ENCODE measurements at regions of chr4 and their contacts with region 1.

Region 1: GRCh38 chr4:168585168-168586091 is 88.6 kb downstream of the PALLD start:
- DNase-seq: no peak
- ATAC-seq: peak; percentile 98
- H3K4me3 ChIP-seq: no peak overlapping the region
- H3K27ac ChIP-seq: no peak overlapping the region
- H3K4me1 ChIP-seq: no peaks in the 10 kb centered on the region
- H3K27me3 ChIP-seq: no peaks in the 10 kb centered on the region
- CTCF ChIP-seq: peak; percentile 38 to 63 (median 63); a peak in 5 of 6 replicates
- EP300 ChIP-seq: no peak
- POLR2A ChIP-seq: no peak
- RAD21 ChIP-seq: peak; percentile 47

Region 2: GRCh38 chr4:168574581-168575295 is 10.7 kb before region 1 on chr4:
- CTCF ChIA-PET with region 1: interaction called, 3 read pairs
- POLR2A ChIA-PET with region 1: no interaction called
- RAD21 ChIA-PET with region 1: interaction called, 3 read pairs
- SMC1A ChIA-PET with region 1: interaction called, 10 read pairs
- in situ Hi-C with region 1: no loop called
- intact Hi-C with region 1: no loop called
- DNase-seq: no peak
- ATAC-seq: no peak
- H3K4me3 ChIP-seq: no peak overlapping the region
- H3K27ac ChIP-seq: no peak overlapping the region
- H3K4me1 ChIP-seq: no peaks in the 10 kb centered on the region
- H3K27me3 ChIP-seq: no peaks in the 10 kb centered on the region
- CTCF ChIP-seq: no peak
- EP300 ChIP-seq: no peak
- POLR2A ChIP-seq: no peak
- RAD21 ChIP-seq: no peak

Region 3: GRCh38 chr4:168604496-168605373 is 19.3 kb after region 1 on chr4:
- CTCF ChIA-PET with region 1: interaction called, 11 read pairs
- POLR2A ChIA-PET with region 1: no interaction called
- RAD21 ChIA-PET with region 1: interaction called, 10 read pairs
- SMC1A ChIA-PET with region 1: no interaction called
- in situ Hi-C with region 1: no loop called
- intact Hi-C with region 1: no loop called
- DNase-seq: no peak
- ATAC-seq: no peak
- H3K4me3 ChIP-seq: no peak overlapping the region
- H3K27ac ChIP-seq: no peak overlapping the region
- H3K4me1 ChIP-seq: no peaks in the 10 kb centered on the region
- H3K27me3 ChIP-seq: no peaks in the 10 kb centered on the region
- CTCF ChIP-seq: no peak
- EP300 ChIP-seq: no peak
- POLR2A ChIP-seq: no peak
- RAD21 ChIP-seq: no peak

Region 4: GRCh38 chr4:168917138-168917779 is 331.8 kb after region 1 on chr4:
- CTCF ChIA-PET with region 1: interaction called, 108 read pairs
- POLR2A ChIA-PET with region 1: interaction called, 3 read pairs
- RAD21 ChIA-PET with region 1: interaction called, 52 read pairs
- SMC1A ChIA-PET with region 1: interaction called, 65 read pairs
- in situ Hi-C with region 1: loop called (anchors 5 kb)
- intact Hi-C with region 1: loop called (anchors 1 kb)
- DNase-seq: no peak
- ATAC-seq: peak; percentile 80
- H3K4me3 ChIP-seq: no peak overlapping the region
- H3K27ac ChIP-seq: no peak overlapping the region
- H3K4me1 ChIP-seq: no peaks in the 10 kb centered on the region
- H3K27me3 ChIP-seq: no peaks in the 10 kb centered on the region
- CTCF ChIP-seq: peak; percentile 37 to 52 (median 41); a peak in 4 of 6 replicates
- EP300 ChIP-seq: no peak
- POLR2A ChIP-seq: no peak
- RAD21 ChIP-seq: peak; percentile 69

Region 5: DNA sequence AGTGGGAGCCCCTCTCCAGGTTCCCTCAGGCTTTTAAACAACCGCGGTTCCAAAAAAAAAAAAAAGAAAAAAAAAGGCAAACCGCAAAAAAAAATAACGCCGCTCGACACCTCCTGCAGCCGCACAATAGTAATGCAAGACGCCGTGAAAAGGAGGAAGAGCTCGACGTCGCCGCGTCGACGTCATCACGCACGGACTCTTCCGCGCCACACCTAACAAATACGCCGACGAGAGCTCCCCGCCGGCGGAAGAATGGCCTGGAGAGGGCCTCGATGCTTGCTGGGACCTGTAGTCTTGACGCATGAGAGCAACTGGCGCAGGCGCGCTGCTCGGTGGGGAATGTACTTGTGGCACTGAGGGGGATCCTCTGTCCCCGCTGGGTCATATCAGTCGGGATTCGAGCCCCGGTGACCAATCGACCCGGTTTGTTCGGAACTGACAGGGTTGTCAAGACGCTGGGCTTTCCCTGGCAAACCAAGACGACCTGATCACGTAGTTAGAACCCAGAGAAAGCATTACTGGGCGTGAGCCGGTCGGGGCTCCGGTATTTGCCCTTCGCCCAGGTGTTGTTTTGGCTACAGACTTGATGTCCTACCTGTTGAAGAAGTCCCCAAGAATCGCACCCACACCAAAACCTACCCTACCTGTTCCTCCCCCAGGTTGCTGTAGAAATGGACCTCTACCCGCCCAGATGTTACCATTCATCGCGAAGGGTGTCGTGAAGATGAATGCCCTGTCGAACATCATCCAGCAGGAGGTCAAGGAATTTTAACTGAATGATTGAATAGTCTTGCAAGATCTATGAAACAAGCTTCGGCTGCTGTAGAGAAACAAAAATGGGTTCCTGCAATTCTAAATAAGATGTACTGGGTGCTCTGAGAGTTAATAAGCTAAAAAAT is 424.9 kb after region 1 on chr4 and contains the start of gene CBR4:
- CTCF ChIA-PET with region 1: interaction called, 3 read pairs
- POLR2A ChIA-PET with region 1: no interaction called
- RAD21 ChIA-PET with region 1: interaction called, 8 read pairs
- SMC1A ChIA-PET with region 1: interaction called, 4 read pairs
- in situ Hi-C with region 1: no loop called
- intact Hi-C with region 1: loop called (anchors 10 kb)
- DNase-seq: peak; percentile 94
- ATAC-seq: peak; percentile 96
- H3K4me3 ChIP-seq: peak within 1 kb of the TSS; percentile 86
- H3K27ac ChIP-seq: peak within 1 kb of the TSS; percentile 91
- H3K4me1 ChIP-seq: no peaks in the 10 kb centered on the region
- H3K27me3 ChIP-seq: no peaks in the 10 kb centered on the region
- CTCF ChIP-seq: peak; percentile 6 to 36 (median 35); a peak in 2 of 6 replicates
- EP300 ChIP-seq: no peak; a peak in 1 of 4 replicates
- POLR2A ChIP-seq: peak; percentile 86
- RAD21 ChIP-seq: 0 out of 2 replicates have a peak, but pooled peaks have one; percentile 11
- polyA plus RNA-seq, gene CBR4: 21.4 to 36.2 TPM

Region 6: GRCh38 chr4:169115897-169116254 is 530.4 kb after region 1 on chr4:
- CTCF ChIA-PET with region 1: no interaction called
- POLR2A ChIA-PET with region 1: no interaction called
- RAD21 ChIA-PET with region 1: no interaction called
- SMC1A ChIA-PET with region 1: no interaction called
- in situ Hi-C with region 1: no loop called
- intact Hi-C with region 1: no loop called
- DNase-seq: no peak
- ATAC-seq: peak; percentile 40
- H3K4me3 ChIP-seq: no peak overlapping the region
- H3K27ac ChIP-seq: no peak overlapping the region
- H3K4me1 ChIP-seq: no peaks in the 10 kb centered on the region
- H3K27me3 ChIP-seq: no peaks in the 10 kb centered on the region
- CTCF ChIP-seq: no peak; a peak in 1 of 6 replicates
- EP300 ChIP-seq: no peak
- POLR2A ChIP-seq: no peak
- RAD21 ChIP-seq: no peak

Measured in GM12878 (cell line).